Dendritic cell treated with granulocyte-macrophage colony-stimulating factor and Interleukin-4, amounts not matched to agents 40 ng/mL and 50 ng/mL, for 4 days (primary cell): ENCODE measurements at regions of chr1 and their contacts with region 1.

Region 1: DNA sequence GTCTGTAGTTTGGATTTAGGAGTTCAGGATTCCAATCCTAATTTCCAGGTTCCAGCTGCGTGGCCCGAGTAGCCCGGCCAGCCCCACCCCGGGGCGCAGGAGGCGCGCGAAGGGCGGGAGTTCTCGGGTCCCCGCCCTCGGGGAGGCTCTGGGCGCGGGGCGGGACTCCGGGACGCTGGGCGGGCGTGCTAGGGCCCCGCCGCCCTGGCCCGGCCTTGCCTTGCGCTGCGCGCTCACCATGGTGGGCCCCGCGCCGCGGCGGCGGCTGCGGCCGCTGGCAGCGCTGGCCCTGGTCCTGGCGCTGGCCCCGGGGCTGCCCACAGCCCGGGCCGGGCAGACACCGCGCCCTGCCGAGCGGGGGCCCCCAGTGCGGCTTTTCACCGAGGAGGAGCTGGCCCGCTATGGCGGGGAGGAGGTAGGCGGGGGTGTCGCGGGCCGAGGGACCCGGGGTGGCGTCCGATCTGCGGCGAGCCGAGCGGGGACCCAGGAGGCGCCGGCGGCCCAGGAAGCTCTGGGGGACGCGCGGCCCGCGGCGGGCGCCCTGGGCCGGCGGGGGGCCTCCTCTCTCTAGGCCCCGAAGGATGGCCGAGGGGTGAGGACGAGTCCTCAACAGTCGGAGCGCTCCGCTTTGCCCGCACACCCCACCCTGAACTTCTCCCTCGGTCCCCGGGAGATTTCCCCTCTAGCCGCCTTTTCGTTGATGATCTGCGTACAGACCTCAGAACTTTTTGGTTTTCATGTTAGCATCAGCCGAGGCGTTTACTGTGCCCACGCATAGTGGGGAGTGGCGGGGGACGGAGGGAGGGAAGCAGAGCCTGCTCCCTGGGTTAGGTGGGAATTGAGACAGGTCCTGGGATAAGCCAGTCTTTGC is at the start of gene NENF:
- H3K4me3 Mint-ChIP-seq: peak within 1 kb of the TSS; percentile 74
- H3K27ac Mint-ChIP-seq: peak within 1 kb of the TSS; percentile 68
- H3K4me1 Mint-ChIP-seq: peaks cover 23% of the 10 kb centered on the region
- H3K27me3 Mint-ChIP-seq: no peaks in the 10 kb centered on the region

Region 2: GRCh38 chr1:212381397-212382035 is 51.4 kb before region 1 on chr1:
- intact Hi-C with region 1: loop called (anchors 5 kb)
- H3K4me3 Mint-ChIP-seq: no peak overlapping the region
- H3K27ac Mint-ChIP-seq: peak overlapping the region; percentile 40
- H3K4me1 Mint-ChIP-seq: peaks cover 37% of the 10 kb centered on the region
- H3K27me3 Mint-ChIP-seq: no peaks in the 10 kb centered on the region

Region 3: DNA sequence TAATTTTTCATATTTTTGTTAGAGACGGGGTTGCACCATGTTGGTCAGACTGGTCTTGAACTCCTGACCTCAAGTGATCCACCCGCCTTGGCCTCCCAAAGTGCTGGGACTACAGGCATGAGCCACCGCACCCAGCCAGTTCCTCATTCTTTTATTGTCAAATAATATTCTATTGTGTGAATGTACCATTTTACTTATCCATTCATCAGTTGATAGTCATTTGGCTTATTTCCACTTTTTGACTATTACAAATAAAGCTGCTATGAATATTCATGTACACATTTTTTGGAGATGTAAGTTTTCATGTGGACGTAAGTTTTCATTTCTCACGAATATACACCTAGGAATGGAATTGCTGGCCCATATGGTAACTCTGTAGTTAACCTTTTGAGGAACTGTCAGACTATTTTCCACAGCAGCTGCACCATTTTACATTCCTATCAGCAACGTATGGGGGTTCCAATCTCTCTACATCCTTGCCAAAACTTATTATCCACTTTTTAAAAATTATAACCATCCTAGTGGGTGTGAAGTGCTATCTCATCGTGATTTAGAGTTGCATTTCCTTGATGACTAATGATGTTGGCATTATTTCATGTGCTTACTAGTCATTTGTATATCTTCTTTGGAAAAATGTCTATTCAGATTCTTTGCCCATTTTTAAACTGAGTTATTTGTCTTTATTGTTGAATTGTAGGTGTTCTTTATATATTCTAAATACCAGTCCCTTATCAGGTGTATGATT is 30.9 kb before region 1 on chr1:
- intact Hi-C with region 1: loop called (anchors 5 kb)
- H3K4me3 Mint-ChIP-seq: no peak overlapping the region
- H3K27ac Mint-ChIP-seq: peak overlapping the region; percentile 54
- H3K4me1 Mint-ChIP-seq: peaks cover 52% of the 10 kb centered on the region
- H3K27me3 Mint-ChIP-seq: no peaks in the 10 kb centered on the region

Region 4: GRCh38 chr1:212414328-212415106 is 18.4 kb before region 1 on chr1 and contains the start of gene PACC1:
- intact Hi-C with region 1: loop called (anchors 1 kb)
- H3K4me3 Mint-ChIP-seq: peak within 1 kb of the TSS; percentile 89
- H3K27ac Mint-ChIP-seq: peak within 1 kb of the TSS; percentile 99
- H3K4me1 Mint-ChIP-seq: peaks cover 89% of the 10 kb centered on the region
- H3K27me3 Mint-ChIP-seq: no peaks in the 10 kb centered on the region

Region 5: DNA sequence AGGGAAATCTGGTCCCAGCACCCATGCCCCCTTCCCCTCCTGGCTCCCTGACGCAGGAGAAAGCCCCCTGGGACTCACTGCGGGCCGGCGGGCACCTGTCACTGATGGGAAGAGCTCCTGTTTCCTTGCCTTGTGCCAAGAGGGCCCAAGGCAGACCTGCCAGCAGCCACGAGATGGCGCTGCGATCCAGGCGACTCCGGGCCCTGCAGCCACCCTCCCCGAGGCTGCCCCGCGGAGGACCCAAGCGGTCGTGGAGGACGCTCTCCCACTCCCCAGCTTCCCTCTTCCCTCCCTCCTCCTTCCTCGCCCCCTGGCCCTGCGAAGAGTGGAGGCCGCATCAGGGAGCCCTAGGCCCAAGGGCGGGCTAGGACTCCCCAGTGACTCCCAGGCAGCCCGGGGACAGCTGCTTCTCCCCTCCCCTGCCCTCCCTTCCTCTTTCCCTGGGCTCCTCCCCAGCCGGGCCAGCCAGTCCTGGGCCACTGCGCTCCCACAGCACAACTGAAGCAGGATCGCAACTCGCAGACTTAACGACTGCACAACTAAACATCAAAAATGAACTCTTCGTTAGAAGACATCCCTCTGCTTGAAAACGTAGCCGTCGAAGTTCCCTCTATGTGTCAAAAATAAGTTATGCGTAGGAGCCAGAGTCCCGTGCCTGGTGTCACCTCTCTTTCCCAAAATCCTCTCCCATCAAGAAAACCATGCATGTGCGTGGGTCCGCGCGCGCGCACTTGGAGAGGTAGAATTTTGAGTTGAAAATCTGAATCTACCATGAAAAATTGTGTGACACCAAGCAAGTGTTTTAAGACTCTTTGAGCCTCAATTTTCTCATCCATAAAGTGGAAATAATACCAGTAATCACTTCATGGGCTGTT is 232.5 kb after region 1 on chr1:
- intact Hi-C with region 1: no loop called
- H3K4me3 Mint-ChIP-seq: peak overlapping the region; percentile 87
- H3K27ac Mint-ChIP-seq: peak overlapping the region; percentile 99
- H3K4me1 Mint-ChIP-seq: peaks cover 75% of the 10 kb centered on the region
- H3K27me3 Mint-ChIP-seq: peaks cover 5% of the 10 kb centered on the region